ENCODE measurements at regions of chr10 and their contacts with region 1.

Region 1: GRCh38 chr10:114694752-114695151 is 36.7 kb upstream of the ABLIM1 start:
- DNase-seq: no peak
- ATAC-seq: peak; percentile 23; the same call in 1 of the 2 replicates
- H3K4me3 ChIP-seq: no peak overlapping the region
- H3K27ac ChIP-seq: peak overlapping the region; percentile 100
- H3K4me1 ChIP-seq: peaks cover 83% of the 10 kb centered on the region
- H3K27me3 ChIP-seq: no peaks in the 10 kb centered on the region
- CTCF ChIP-seq: peak; percentile 92

Region 2: DNA sequence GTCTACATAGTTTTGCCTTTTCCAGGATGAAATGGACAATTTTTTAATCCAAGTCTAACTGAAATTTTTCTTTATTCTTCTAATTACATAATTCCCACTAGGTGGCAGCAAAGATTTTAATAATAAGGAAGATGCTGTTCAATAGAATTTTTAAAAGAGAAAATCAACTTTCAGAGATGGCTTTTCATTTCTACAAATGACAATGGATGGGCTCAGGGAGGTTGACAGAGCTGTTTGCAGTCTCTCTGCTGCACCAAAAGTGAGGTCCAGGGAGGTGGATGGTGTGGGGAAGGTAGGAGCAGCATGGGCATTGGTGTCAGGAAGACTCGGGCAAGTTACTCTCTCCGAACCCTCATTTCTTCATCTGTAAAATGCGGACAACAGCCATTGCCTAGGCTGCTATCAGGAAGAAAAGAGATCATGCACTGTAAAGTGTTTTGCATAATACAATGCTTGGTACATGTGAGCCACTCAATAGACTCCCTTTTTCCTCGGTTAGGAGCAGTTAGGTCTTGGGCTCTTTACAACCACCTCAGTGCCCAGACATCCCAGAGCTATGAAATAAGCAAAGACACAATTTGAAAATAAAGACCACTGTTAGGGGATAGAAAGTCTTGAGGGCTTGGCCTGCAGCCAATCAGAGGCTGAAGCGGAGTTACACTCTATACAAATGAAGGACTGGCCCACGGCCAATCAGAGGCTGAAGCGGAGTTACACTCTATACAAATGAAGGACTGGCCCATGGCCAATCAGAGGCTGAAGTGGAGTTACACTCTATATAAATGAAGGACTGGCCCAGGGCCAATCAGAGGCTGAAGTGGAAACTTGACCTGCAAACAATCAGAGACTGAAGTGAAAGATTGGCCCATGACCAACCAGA is 143.8 kb before region 1 on chr10:
- CTCF ChIA-PET with region 1: interaction called, 3 read pairs
- POLR2A ChIA-PET with region 1: no interaction called
- in situ Hi-C with region 1: no loop called
- intact Hi-C with region 1: loop called (anchors 5 kb)
- DNase-seq: no peak
- ATAC-seq: peak; percentile 47
- H3K4me3 ChIP-seq: no peak overlapping the region
- H3K27ac ChIP-seq: peak overlapping the region; percentile 81
- H3K4me1 ChIP-seq: peaks cover 34% of the 10 kb centered on the region
- H3K27me3 ChIP-seq: no peaks in the 10 kb centered on the region
- CTCF ChIP-seq: peak; percentile 62

Region 3: GRCh38 chr10:114869520-114869892 is 174.8 kb after region 1 on chr10:
- CTCF ChIA-PET with region 1: no interaction called
- POLR2A ChIA-PET with region 1: no interaction called
- in situ Hi-C with region 1: no loop called
- intact Hi-C with region 1: no loop called
- DNase-seq: no peak
- ATAC-seq: no peak
- H3K4me3 ChIP-seq: no peak overlapping the region
- H3K27ac ChIP-seq: no peak overlapping the region
- H3K4me1 ChIP-seq: no peaks in the 10 kb centered on the region
- H3K27me3 ChIP-seq: no peaks in the 10 kb centered on the region
- CTCF ChIP-seq: no peak